ENCODE measurements at regions of chr1 and their contacts with region 1.

Region 1: GRCh38 chr1:225400968-225401367 is 26.9 kb downstream of the LBR start:
- DNase-seq: no peak
- ATAC-seq: no peak
- H3K4me3 ChIP-seq: no peak overlapping the region
- H3K27ac ChIP-seq: no peak overlapping the region
- H3K4me1 ChIP-seq: no peaks in the 10 kb centered on the region
- H3K27me3 ChIP-seq: no peaks in the 10 kb centered on the region
- CTCF ChIP-seq: no peak

Region 2: DNA sequence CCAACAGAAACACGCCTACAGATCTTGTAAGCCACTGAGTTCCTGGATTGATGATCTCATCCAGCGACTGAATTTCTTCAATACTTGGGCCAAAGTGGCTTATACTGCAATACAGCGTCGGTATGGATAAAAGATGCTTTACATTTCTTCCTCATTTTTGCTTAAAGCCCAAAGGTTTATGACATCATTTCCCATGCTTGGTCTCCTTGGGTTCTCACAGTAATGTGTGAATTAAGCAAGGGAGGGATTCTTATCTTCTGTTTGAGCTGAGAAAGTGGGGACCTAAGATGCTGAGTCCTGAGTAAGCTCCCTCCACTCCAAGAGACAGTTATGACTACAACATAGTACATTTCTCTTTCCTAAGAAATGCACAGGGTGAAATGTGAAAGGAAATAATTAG is 12.6 kb before region 1 on chr1:
- CTCF ChIA-PET with region 1: no interaction called
- POLR2A ChIA-PET with region 1: interaction called, 11 read pairs
- in situ Hi-C with region 1: no loop called
- intact Hi-C with region 1: no loop called
- DNase-seq: no peak
- ATAC-seq: no peak
- H3K4me3 ChIP-seq: no peak overlapping the region
- H3K27ac ChIP-seq: no peak overlapping the region
- H3K4me1 ChIP-seq: no peaks in the 10 kb centered on the region
- H3K27me3 ChIP-seq: no peaks in the 10 kb centered on the region
- CTCF ChIP-seq: no peak

Region 3: GRCh38 chr1:225428068-225428880 is 27.3 kb after region 1 on chr1:
- CTCF ChIA-PET with region 1: no interaction called
- POLR2A ChIA-PET with region 1: no interaction called
- in situ Hi-C with region 1: no loop called
- intact Hi-C with region 1: no loop called
- DNase-seq: no peak
- ATAC-seq: peak; percentile 96
- H3K4me3 ChIP-seq: peak overlapping the region; percentile 80 to 86
- H3K27ac ChIP-seq: peak overlapping the region; percentile 90
- H3K4me1 ChIP-seq: peaks cover 33% of the 10 kb centered on the region
- H3K27me3 ChIP-seq: no peaks in the 10 kb centered on the region
- CTCF ChIP-seq: no peak

Region 4: DNA sequence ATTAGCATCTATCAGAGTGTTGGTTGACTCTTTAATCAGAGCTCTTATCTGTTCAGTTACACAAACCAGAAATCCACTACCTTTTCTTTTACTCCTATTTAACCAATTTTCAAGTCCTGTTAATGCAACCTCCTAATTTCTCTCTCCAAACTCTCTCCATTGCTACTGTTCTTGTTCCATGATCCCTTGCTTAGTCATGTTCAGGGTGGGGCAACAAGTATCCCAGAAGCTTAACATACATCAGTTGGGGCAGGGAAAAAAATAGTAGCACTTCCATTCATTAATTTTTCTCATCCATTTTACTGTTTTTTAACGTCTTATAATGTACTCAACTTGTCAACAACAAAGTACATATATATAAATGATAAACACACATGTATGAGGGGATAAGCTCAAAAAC is 138.1 kb after region 1 on chr1:
- CTCF ChIA-PET with region 1: no interaction called
- POLR2A ChIA-PET with region 1: no interaction called
- in situ Hi-C with region 1: no loop called
- intact Hi-C with region 1: no loop called
- DNase-seq: no peak
- ATAC-seq: no peak
- H3K4me3 ChIP-seq: no peak overlapping the region
- H3K27ac ChIP-seq: no peak overlapping the region
- H3K4me1 ChIP-seq: peaks cover 2% of the 10 kb centered on the region
- H3K27me3 ChIP-seq: no peaks in the 10 kb centered on the region
- CTCF ChIP-seq: no peak

Region 5: DNA sequence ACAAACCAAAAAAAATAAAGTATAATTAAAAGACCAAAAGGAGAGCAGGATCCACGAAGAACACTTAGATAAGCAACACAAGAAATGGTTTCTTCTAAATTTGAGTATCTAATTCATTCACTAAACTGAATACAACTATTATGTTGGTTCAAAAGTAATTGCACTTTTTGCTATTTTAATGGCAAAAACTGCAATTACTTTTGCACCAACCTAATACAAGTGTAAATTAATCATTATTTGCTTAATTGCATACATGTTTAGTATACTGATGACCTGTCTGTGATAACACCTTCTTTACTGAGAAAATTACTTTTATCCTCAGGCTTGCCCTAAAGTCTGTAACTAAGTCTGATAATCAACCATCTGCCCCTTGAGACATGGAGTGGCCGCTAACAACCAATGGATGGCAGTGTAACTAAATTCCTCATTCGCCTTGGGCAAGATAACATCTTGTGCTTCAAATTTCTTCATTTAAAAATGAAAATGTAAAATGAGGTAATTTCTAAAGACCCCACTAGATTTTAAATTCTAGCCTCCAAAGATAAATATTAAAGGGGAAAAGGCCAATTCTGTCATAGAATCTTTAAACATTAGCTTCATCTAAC is 166.7 kb after region 1 on chr1:
- CTCF ChIA-PET with region 1: no interaction called
- POLR2A ChIA-PET with region 1: no interaction called
- in situ Hi-C with region 1: no loop called
- intact Hi-C with region 1: no loop called
- DNase-seq: no peak
- ATAC-seq: no peak
- H3K4me3 ChIP-seq: no peak overlapping the region
- H3K27ac ChIP-seq: no peak overlapping the region
- H3K4me1 ChIP-seq: no peaks in the 10 kb centered on the region
- H3K27me3 ChIP-seq: no peaks in the 10 kb centered on the region
- CTCF ChIP-seq: peak; percentile 37; the same call in 1 of the 2 replicates